Caco-2 (cell line): ENCODE measurements at regions of chr9 and their contacts with region 1.

Region 1: GRCh38 chr9:136571531-136571930 is 25.7 kb upstream of the NOTCH1 start:
- DNase-seq: peak in 1 of 2 experiments; percentile 28
- H3K4me3 ChIP-seq: no peak overlapping the region
- H3K4me3 Mint-ChIP-seq: peak overlapping the region; percentile 70
- H3K27ac Mint-ChIP-seq: peak overlapping the region; percentile 97
- H3K4me1 ChIP-seq: peaks cover 58% of the 10 kb centered on the region
- H3K4me1 Mint-ChIP-seq: peaks cover 29% of the 10 kb centered on the region
- H3K27me3 ChIP-seq: no peaks in the 10 kb centered on the region
- H3K27me3 Mint-ChIP-seq: no peaks in the 10 kb centered on the region
- CTCF ChIP-seq: no peak

Region 2: DNA sequence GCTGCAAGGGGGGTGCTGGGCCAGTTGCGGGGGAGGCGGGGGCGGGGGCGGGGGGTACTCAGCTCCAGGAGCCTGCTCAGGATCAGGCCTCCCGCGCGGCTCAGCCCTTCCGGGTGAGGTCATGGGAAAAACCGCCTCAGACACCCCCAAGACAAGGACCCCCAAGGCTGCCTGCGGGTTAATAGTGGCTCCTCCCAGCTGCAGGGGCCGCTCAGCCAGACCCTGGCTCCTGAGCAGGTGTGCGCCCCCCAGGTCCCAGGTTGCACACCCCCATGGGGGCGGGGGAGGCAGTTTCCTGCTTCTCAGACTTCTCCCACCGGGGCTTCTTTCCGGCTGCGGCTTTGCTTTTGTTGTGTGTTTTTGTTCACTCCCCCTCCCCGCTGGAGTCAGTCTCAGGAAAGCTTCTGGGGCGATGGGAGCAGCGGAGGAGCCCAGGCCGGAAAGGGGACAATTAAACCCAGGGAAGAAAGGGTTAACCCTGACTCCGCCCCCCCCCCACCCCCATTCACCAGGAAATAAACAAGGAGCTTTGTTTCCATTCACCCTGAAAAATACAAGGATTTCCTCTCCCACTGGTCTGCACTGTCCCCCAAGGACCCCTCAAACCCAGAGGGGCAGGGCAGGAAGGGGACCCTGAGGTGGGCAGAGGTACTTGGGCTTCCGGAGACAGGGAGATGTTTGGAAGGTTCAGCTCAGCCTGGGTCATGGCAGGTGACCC is 16.6 kb after region 1 on chr9:
- CTCF ChIA-PET with region 1: no interaction called
- POLR2A ChIA-PET with region 1: interaction called, 16 read pairs
- intact Hi-C with region 1: no loop called
- DNase-seq: no peak
- H3K4me3 ChIP-seq: no peak overlapping the region
- H3K4me3 Mint-ChIP-seq: no peak overlapping the region
- H3K27ac Mint-ChIP-seq: no peak overlapping the region
- H3K4me1 ChIP-seq: no peaks in the 10 kb centered on the region
- H3K4me1 Mint-ChIP-seq: no peaks in the 10 kb centered on the region
- H3K27me3 ChIP-seq: no peaks in the 10 kb centered on the region
- H3K27me3 Mint-ChIP-seq: no peaks in the 10 kb centered on the region
- CTCF ChIP-seq: no peak